AG04449 (cell line): ENCODE measurements at regions of chr3 and their contacts with region 1.

Region 1: GRCh38 chr3:137105277-137105977 is 147.6 kb downstream of the IL20RB start:
- DNase-seq: no peak
- H3K4me3 ChIP-seq: no peak overlapping the region
- CTCF ChIP-seq: peak; percentile 40

Region 2: GRCh38 chr3:137013955-137014688 is 91.3 kb before region 1 on chr3:
- CTCF ChIA-PET with region 1: no interaction called
- POLR2A ChIA-PET with region 1: no interaction called
- DNase-seq: peak; percentile 29
- H3K4me3 ChIP-seq: peak overlapping the region; percentile 67
- CTCF ChIP-seq: peak; percentile 75

Region 3: GRCh38 chr3:137121704-137122314 is 16.4 kb after region 1 on chr3:
- CTCF ChIA-PET with region 1: interaction called, 46 read pairs
- POLR2A ChIA-PET with region 1: no interaction called
- DNase-seq: no peak
- H3K4me3 ChIP-seq: no peak overlapping the region
- CTCF ChIP-seq: peak; percentile 66

Region 4: GRCh38 chr3:137946345-137946973 is 841.0 kb after region 1 on chr3:
- CTCF ChIA-PET with region 1: interaction called, 92 read pairs
- POLR2A ChIA-PET with region 1: no interaction called
- DNase-seq: peak; percentile 9
- H3K4me3 ChIP-seq: no peak overlapping the region
- CTCF ChIP-seq: peak; percentile 63

Region 5: GRCh38 chr3:137970914-137971831 is 865.7 kb after region 1 on chr3:
- CTCF ChIA-PET with region 1: interaction called, 16 read pairs
- POLR2A ChIA-PET with region 1: no interaction called
- DNase-seq: no peak
- H3K4me3 ChIP-seq: no peak overlapping the region
- CTCF ChIP-seq: peak; percentile 91